CD8-positive, alpha-beta memory T cell (primary cell): ENCODE measurements at regions of chr11 and their contacts with region 1.

Region 1: GRCh38 chr11:65477149-65477965 is 21.5 kb upstream of the MALAT1 start:
- DNase-seq: peak; percentile 82 to 94 (median 86)
- H3K4me3 ChIP-seq: peak overlapping the region; percentile 86
- H3K4me3 Mint-ChIP-seq: peak overlapping the region; percentile 90 to 100 (median 97)
- H3K27ac ChIP-seq: peak overlapping the region; percentile 98
- H3K27ac Mint-ChIP-seq: peak overlapping the region; percentile 96 to 100 (median 100)
- H3K4me1 ChIP-seq: peaks cover 12% of the 10 kb centered on the region
- H3K4me1 Mint-ChIP-seq: peaks cover 12 to 27% (median 14%) of the 10 kb centered on the region in 3 donors
- H3K27me3 ChIP-seq: no peaks in the 10 kb centered on the region
- H3K27me3 Mint-ChIP-seq: no peaks in the 10 kb centered on the region

Region 2: GRCh38 chr11:65404638-65405339 is 72.6 kb before region 1 on chr11:
- CTCF ChIA-PET with region 1: no interaction called
- POLR2A ChIA-PET with region 1: no interaction called
- DNase-seq: no peak
- H3K4me3 ChIP-seq: no peak overlapping the region
- H3K4me3 Mint-ChIP-seq: no peak overlapping the region
- H3K27ac ChIP-seq: no peak overlapping the region
- H3K27ac Mint-ChIP-seq: peak overlapping the region in 2 of 8 donors; percentile 14 to 42
- H3K4me1 ChIP-seq: no peaks in the 10 kb centered on the region
- H3K4me1 Mint-ChIP-seq: peaks cover 0 to 3% (median 0%) of the 10 kb centered on the region in 3 donors
- H3K27me3 ChIP-seq: no peaks in the 10 kb centered on the region
- H3K27me3 Mint-ChIP-seq: no peaks in the 10 kb centered on the region

Region 3: GRCh38 chr11:65425105-65425970 is 52.0 kb before region 1 on chr11:
- CTCF ChIA-PET with region 1: interaction called, 5 read pairs
- POLR2A ChIA-PET with region 1: interaction called, 33 read pairs
- DNase-seq: peak; percentile 69 to 95 (median 93)
- H3K4me3 ChIP-seq: peak overlapping the region; percentile 89
- H3K4me3 Mint-ChIP-seq: peak overlapping the region; percentile 93 to 97 (median 94)
- H3K27ac ChIP-seq: peak overlapping the region; percentile 98
- H3K27ac Mint-ChIP-seq: peak overlapping the region; percentile 94 to 100 (median 97)
- H3K4me1 ChIP-seq: peaks cover 52% of the 10 kb centered on the region
- H3K4me1 Mint-ChIP-seq: peaks cover 57 to 63% (median 62%) of the 10 kb centered on the region in 3 donors
- H3K27me3 ChIP-seq: no peaks in the 10 kb centered on the region
- H3K27me3 Mint-ChIP-seq: peaks cover 0 to 24% of the 10 kb centered on the region in 2 donors

Region 4: GRCh38 chr11:65524014-65524740 is 46.8 kb after region 1 on chr11:
- CTCF ChIA-PET with region 1: no interaction called
- POLR2A ChIA-PET with region 1: no interaction called
- DNase-seq: peak in 2 of 5 donors; percentile 16 to 59
- H3K4me3 ChIP-seq: peak overlapping the region; percentile 46
- H3K4me3 Mint-ChIP-seq: peak overlapping the region; percentile 67 to 82 (median 74)
- H3K27ac ChIP-seq: no peak overlapping the region
- H3K27ac Mint-ChIP-seq: peak overlapping the region; percentile 58 to 97 (median 92)
- H3K4me1 ChIP-seq: peaks cover 44% of the 10 kb centered on the region
- H3K4me1 Mint-ChIP-seq: peaks cover 42 to 57% (median 42%) of the 10 kb centered on the region in 3 donors
- H3K27me3 ChIP-seq: no peaks in the 10 kb centered on the region
- H3K27me3 Mint-ChIP-seq: peaks cover 0 to 1% of the 10 kb centered on the region in 2 donors